Mammary epithelial cell (primary cell): ENCODE measurements at regions of chr4 and their contacts with region 1.

Region 1: GRCh38 chr4:1167247-1167949 is 5.0 kb downstream of the SPON2 start:
- DNase-seq: peak; percentile 31
- H3K4me3 ChIP-seq: peak overlapping the region in 1 of 3 experiments; percentile 43
- H3K27ac ChIP-seq: no peak overlapping the region
- H3K4me1 ChIP-seq: peaks cover 4% of the 10 kb centered on the region
- H3K27me3 ChIP-seq: peaks cover 22% of the 10 kb centered on the region
- CTCF ChIP-seq: peak; percentile 67 to 92

Region 2: GRCh38 chr4:674172-675035 is 493.0 kb before region 1 on chr4 and contains the starts of genes ATP5ME and MYL5:
- CTCF ChIA-PET with region 1: no interaction called
- dilution Hi-C with region 1: no loop called
- in situ Hi-C with region 1: no loop called
- intact Hi-C with region 1: no loop called
- DNase-seq: peak; percentile 95
- H3K4me3 ChIP-seq: peak within 1 kb of the TSS; percentile 78 to 93 (median 92)
- H3K27ac ChIP-seq: peak within 1 kb of the TSS; percentile 86
- H3K4me1 ChIP-seq: peaks cover 30% of the 10 kb centered on the region
- H3K27me3 ChIP-seq: no peaks in the 10 kb centered on the region
- CTCF ChIP-seq: peak; percentile 91 to 93
- total RNA-seq, gene ATP5ME: 38.7 to 284 TPM
- total RNA-seq, gene MYL5: 11.2 to 31.9 TPM

Region 3: GRCh38 chr4:1113311-1114009 is 53.9 kb before region 1 on chr4 and contains the start of gene RNF212:
- CTCF ChIA-PET with region 1: no interaction called
- dilution Hi-C with region 1: loop called (anchors 5 kb)
- in situ Hi-C with region 1: no loop called
- intact Hi-C with region 1: no loop called
- DNase-seq: no peak
- H3K4me3 ChIP-seq: peak within 1 kb of the TSS in 2 of 3 experiments; percentile 40 to 42
- H3K27ac ChIP-seq: no peak within 1 kb of the TSS
- H3K4me1 ChIP-seq: peaks cover 4% of the 10 kb centered on the region
- H3K27me3 ChIP-seq: no peaks in the 10 kb centered on the region
- CTCF ChIP-seq: no peak
- total RNA-seq, gene RNF212: 0.33 to 2.2 TPM

Region 4: GRCh38 chr4:1192091-1192492 is 24.7 kb after region 1 on chr4:
- CTCF ChIA-PET with region 1: no interaction called
- dilution Hi-C with region 1: no loop called
- in situ Hi-C with region 1: no loop called
- intact Hi-C with region 1: loop called (anchors 2 kb)
- DNase-seq: peak; percentile 86
- H3K4me3 ChIP-seq: no peak overlapping the region
- H3K27ac ChIP-seq: no peak overlapping the region
- H3K4me1 ChIP-seq: peaks cover 16% of the 10 kb centered on the region
- H3K27me3 ChIP-seq: no peaks in the 10 kb centered on the region
- CTCF ChIP-seq: no peak

Region 5: DNA sequence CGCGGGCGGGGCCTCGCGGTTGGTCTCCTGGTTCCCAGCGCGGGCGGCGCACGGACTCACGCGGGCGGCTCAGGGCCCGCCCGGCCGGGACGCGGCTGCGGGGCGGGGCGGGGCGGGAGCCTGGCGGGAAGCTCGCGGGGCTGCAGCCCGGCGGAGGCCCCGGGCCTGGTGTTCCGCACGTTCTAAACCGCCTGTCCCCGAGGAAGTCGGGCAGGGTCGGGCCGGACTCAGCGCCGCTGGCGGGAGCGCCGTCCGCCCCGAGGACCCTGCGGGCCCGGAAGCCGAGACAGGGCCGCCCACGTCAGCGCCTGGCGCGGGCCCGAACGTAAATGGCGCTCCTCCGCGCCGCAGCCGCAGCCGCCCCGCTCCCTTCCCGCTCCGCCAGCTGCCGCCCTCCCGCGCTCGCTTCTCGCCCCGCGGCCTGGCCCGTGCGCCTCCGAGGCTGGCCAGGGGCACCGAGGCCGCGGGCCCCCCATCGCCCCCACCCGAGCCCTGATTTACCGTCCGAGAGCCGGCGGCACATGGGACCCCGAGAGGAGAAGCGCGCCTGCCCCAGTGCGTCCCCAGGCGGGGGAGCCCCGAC is 81.8 kb after region 1 on chr4:
- CTCF ChIA-PET with region 1: no interaction called
- dilution Hi-C with region 1: loop called (anchors 10 kb)
- in situ Hi-C with region 1: no loop called
- intact Hi-C with region 1: loop called (anchors 5 kb)
- DNase-seq: peak; percentile 81
- H3K4me3 ChIP-seq: peak overlapping the region; percentile 54 to 62 (median 55)
- H3K27ac ChIP-seq: peak overlapping the region; percentile 54
- H3K4me1 ChIP-seq: peaks cover 32% of the 10 kb centered on the region
- H3K27me3 ChIP-seq: no peaks in the 10 kb centered on the region
- CTCF ChIP-seq: no peak

Region 6: GRCh38 chr4:1266881-1267763 is 99.7 kb after region 1 on chr4:
- CTCF ChIA-PET with region 1: interaction called, 4 read pairs
- dilution Hi-C with region 1: no loop called
- in situ Hi-C with region 1: no loop called
- intact Hi-C with region 1: loop called (anchors 1 kb)
- DNase-seq: no peak
- H3K4me3 ChIP-seq: no peak overlapping the region
- H3K27ac ChIP-seq: no peak overlapping the region
- H3K4me1 ChIP-seq: no peaks in the 10 kb centered on the region
- H3K27me3 ChIP-seq: no peaks in the 10 kb centered on the region
- CTCF ChIP-seq: no peak

Region 7: GRCh38 chr4:1666391-1666790 is 499.0 kb after region 1 on chr4:
- CTCF ChIA-PET with region 1: no interaction called
- dilution Hi-C with region 1: no loop called
- in situ Hi-C with region 1: no loop called
- intact Hi-C with region 1: no loop called
- DNase-seq: no peak
- H3K4me3 ChIP-seq: no peak overlapping the region
- H3K27ac ChIP-seq: no peak overlapping the region
- H3K4me1 ChIP-seq: no peaks in the 10 kb centered on the region
- H3K27me3 ChIP-seq: no peaks in the 10 kb centered on the region
- CTCF ChIP-seq: no peak